ENCODE measurements at regions of chr17 and their contacts with region 1.

Region 1: GRCh38 chr17:46071796-46072195 is 72.7 kb downstream of the STH start:
- DNase-seq: no peak
- H3K4me3 ChIP-seq: no peak overlapping the region
- H3K4me3 Mint-ChIP-seq: no peak overlapping the region
- H3K27ac Mint-ChIP-seq: peak overlapping the region; percentile 92
- H3K4me1 ChIP-seq: peaks cover 40% of the 10 kb centered on the region
- H3K4me1 Mint-ChIP-seq: peaks cover 30% of the 10 kb centered on the region
- H3K27me3 ChIP-seq: no peaks in the 10 kb centered on the region
- H3K27me3 Mint-ChIP-seq: no peaks in the 10 kb centered on the region
- CTCF ChIP-seq: no peak

Region 2: GRCh38 chr17:47180337-47180736 is 1108.5 kb after region 1 on chr17:
- CTCF ChIA-PET with region 1: no interaction called
- POLR2A ChIA-PET with region 1: interaction called, 10 read pairs
- intact Hi-C with region 1: no loop called
- DNase-seq: no peak
- H3K4me3 ChIP-seq: no peak overlapping the region
- H3K4me3 Mint-ChIP-seq: no peak overlapping the region
- H3K27ac Mint-ChIP-seq: no peak overlapping the region
- H3K4me1 ChIP-seq: peaks cover 6% of the 10 kb centered on the region; the same call in 1 of the 2 replicates
- H3K4me1 Mint-ChIP-seq: peaks cover 6% of the 10 kb centered on the region
- H3K27me3 ChIP-seq: no peaks in the 10 kb centered on the region
- H3K27me3 Mint-ChIP-seq: no peaks in the 10 kb centered on the region
- CTCF ChIP-seq: no peak